Naive thymus-derived CD4-positive, alpha-beta T cell (primary cell): ENCODE measurements at regions of chr12 and their contacts with region 1.

Region 1: GRCh38 chr12:64160711-64161060 is 61.4 kb downstream of the KICS2 start:
- DNase-seq: no peak
- ATAC-seq: no peak
- H3K4me3 ChIP-seq: no peak overlapping the region
- H3K4me3 Mint-ChIP-seq: no peak overlapping the region
- H3K27ac ChIP-seq: no peak overlapping the region
- H3K27ac Mint-ChIP-seq: no peak overlapping the region
- H3K4me1 ChIP-seq: no peaks in the 10 kb centered on the region
- H3K4me1 Mint-ChIP-seq: no peaks in the 10 kb centered on the region
- H3K27me3 ChIP-seq: no peaks in the 10 kb centered on the region
- H3K27me3 Mint-ChIP-seq: peaks cover 0 to 7% (median 0%) of the 10 kb centered on the region in 5 donors

Region 2: GRCh38 chr12:65495233-65495632 is 1334.5 kb after region 1 on chr12:
- CTCF ChIA-PET with region 1: no interaction called
- POLR2A ChIA-PET with region 1: no interaction called
- intact Hi-C with region 1: loop called in 1 of 2 experiments (anchors 10 kb)
- DNase-seq: no peak
- ATAC-seq: no peak
- H3K4me3 ChIP-seq: no peak overlapping the region
- H3K4me3 Mint-ChIP-seq: no peak overlapping the region
- H3K27ac ChIP-seq: no peak overlapping the region
- H3K27ac Mint-ChIP-seq: no peak overlapping the region
- H3K4me1 ChIP-seq: no peaks in the 10 kb centered on the region
- H3K4me1 Mint-ChIP-seq: peaks cover 0 to 3% (median 0%) of the 10 kb centered on the region in 7 donors
- H3K27me3 ChIP-seq: no peaks in the 10 kb centered on the region
- H3K27me3 Mint-ChIP-seq: peaks cover 0 to 29% (median 14%) of the 10 kb centered on the region in 5 donors